ENCODE measurements at regions of chr11 and their contacts with region 1.

Region 1: DNA sequence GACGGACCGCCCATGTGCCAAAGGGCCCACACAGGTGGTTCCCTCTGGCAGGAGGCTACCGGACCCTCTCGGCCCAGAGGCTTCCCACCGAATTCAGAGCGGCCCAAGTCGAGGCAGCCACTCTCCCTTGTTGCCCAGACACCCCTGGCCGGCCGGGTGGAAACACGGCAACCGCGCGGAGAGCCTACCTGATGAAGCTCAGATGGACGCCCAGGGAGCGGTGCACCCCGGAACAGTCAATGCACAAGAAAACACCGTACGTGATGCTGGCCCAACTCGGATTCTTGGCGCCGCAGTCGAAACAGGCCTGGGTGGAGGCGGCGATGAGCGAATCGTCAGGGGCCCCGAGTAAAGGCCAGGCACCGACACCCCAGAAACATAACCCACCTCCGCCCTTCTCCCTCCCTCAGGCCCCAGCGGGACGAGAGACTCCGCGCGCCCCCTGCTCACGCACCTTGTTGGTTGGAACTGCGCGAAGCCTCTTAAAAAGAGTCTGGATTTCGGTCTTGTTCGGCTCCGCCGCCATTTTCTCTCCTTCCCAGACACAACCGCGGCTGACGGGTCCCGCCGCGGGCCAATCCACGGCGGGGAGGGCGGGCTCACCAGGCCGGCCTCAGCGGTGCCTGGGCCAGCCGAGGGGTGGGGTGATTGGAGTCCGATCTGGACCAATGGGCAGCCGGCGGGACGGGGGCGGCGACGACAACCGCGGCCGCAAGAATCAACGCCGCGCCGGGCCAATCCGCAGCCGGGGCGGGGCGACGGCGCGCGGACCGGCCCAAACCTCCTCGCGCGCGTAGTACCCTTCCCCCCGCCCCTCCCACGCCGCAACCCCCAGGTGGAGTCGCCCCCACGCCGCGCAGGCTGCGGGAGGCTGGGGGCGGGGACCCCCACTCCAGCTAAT is at the start of gene ARFGAP2:
- DNase-seq: peak; percentile 97 to 98 (median 98)
- H3K4me3 ChIP-seq: peak within 1 kb of the TSS; percentile 70 to 100 (median 96)
- H3K27ac ChIP-seq: peak within 1 kb of the TSS; percentile 98
- H3K4me1 ChIP-seq: peaks cover 2 to 31% (median 29%) of the 10 kb centered on the region in 4 experiments
- H3K27me3 ChIP-seq: no peaks in the 10 kb centered on the region

Region 2: GRCh38 chr11:47152953-47153950 is 23.3 kb before region 1 on chr11:
- CTCF ChIA-PET with region 1: interaction called, 15 read pairs
- POLR2A ChIA-PET with region 1: no interaction called
- DNase-seq: peak; percentile 64 to 76 (median 69)
- H3K4me3 ChIP-seq: no peak overlapping the region
- H3K27ac ChIP-seq: no peak overlapping the region
- H3K4me1 ChIP-seq: peaks cover 6 to 46% (median 34%) of the 10 kb centered on the region in 4 experiments
- H3K27me3 ChIP-seq: no peaks in the 10 kb centered on the region

Region 3: GRCh38 chr11:47161134-47161854 is 15.3 kb before region 1 on chr11:
- CTCF ChIA-PET with region 1: interaction called, 26 read pairs
- POLR2A ChIA-PET with region 1: no interaction called
- DNase-seq: peak; percentile 59 to 86 (median 81)
- H3K4me3 ChIP-seq: no peak overlapping the region
- H3K27ac ChIP-seq: no peak overlapping the region
- H3K4me1 ChIP-seq: peaks cover 0 to 20% (median 14%) of the 10 kb centered on the region in 4 experiments
- H3K27me3 ChIP-seq: no peaks in the 10 kb centered on the region

Region 4: GRCh38 chr11:47220401-47220824 is 43.8 kb after region 1 on chr11:
- CTCF ChIA-PET with region 1: interaction called, 14 read pairs
- POLR2A ChIA-PET with region 1: no interaction called
- DNase-seq: no peak
- H3K4me3 ChIP-seq: no peak overlapping the region
- H3K27ac ChIP-seq: no peak overlapping the region
- H3K4me1 ChIP-seq: peaks cover 8 to 22% (median 14%) of the 10 kb centered on the region in 4 experiments
- H3K27me3 ChIP-seq: no peaks in the 10 kb centered on the region

Region 5: DNA sequence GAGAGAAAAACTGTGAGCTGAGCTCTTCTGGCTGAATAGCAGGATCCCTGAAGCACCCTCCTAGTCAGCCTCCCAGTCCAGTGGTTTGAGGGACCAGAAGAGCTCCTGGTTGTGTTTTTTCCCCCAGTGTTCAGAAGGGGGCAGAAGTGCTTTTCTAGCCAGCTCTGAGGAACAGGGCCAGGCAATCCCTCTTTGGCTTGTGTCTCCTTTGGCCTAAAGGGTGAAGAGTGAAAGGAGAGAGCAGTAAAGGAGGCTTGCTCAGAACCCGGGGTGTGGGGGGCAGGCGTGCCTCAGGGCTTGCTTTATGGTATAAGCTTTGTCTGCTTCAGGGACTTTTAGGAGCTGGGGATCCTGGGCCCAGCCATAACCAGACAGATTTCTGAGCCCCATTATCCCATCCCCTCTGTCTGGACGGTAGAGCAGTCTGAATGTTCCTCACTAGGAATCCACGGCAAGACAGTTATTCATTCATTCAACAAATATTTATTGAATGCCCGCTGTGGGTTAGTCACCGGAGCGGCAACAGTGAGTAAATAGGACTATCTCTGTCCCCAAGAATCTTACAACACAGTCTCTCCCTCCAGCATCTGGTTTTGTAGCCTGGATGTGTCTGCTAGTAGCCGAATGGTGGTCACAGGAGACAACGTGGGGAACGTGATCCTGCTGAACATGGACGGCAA is 57.6 kb after region 1 on chr11:
- CTCF ChIA-PET with region 1: interaction called, 29 read pairs
- POLR2A ChIA-PET with region 1: no interaction called
- DNase-seq: peak; percentile 63 to 72 (median 70)
- H3K4me3 ChIP-seq: peak overlapping the region in 1 of 7 experiments; percentile 4
- H3K27ac ChIP-seq: no peak overlapping the region
- H3K4me1 ChIP-seq: peaks cover 0 to 15% (median 7%) of the 10 kb centered on the region in 4 experiments
- H3K27me3 ChIP-seq: no peaks in the 10 kb centered on the region

Region 6: GRCh38 chr11:47259178-47259977 is 82.8 kb after region 1 on chr11:
- CTCF ChIA-PET with region 1: interaction called, 65 read pairs
- POLR2A ChIA-PET with region 1: interaction called, 3 read pairs
- DNase-seq: peak; percentile 64 to 94 (median 91)
- H3K4me3 ChIP-seq: peak overlapping the region in 5 of 7 experiments; percentile 16 to 77 (median 56)
- H3K27ac ChIP-seq: peak overlapping the region in 1 of 2 experiments; percentile 75
- H3K4me1 ChIP-seq: peaks cover 14 to 69% (median 57%) of the 10 kb centered on the region in 4 experiments
- H3K27me3 ChIP-seq: no peaks in the 10 kb centered on the region

Region 7: DNA sequence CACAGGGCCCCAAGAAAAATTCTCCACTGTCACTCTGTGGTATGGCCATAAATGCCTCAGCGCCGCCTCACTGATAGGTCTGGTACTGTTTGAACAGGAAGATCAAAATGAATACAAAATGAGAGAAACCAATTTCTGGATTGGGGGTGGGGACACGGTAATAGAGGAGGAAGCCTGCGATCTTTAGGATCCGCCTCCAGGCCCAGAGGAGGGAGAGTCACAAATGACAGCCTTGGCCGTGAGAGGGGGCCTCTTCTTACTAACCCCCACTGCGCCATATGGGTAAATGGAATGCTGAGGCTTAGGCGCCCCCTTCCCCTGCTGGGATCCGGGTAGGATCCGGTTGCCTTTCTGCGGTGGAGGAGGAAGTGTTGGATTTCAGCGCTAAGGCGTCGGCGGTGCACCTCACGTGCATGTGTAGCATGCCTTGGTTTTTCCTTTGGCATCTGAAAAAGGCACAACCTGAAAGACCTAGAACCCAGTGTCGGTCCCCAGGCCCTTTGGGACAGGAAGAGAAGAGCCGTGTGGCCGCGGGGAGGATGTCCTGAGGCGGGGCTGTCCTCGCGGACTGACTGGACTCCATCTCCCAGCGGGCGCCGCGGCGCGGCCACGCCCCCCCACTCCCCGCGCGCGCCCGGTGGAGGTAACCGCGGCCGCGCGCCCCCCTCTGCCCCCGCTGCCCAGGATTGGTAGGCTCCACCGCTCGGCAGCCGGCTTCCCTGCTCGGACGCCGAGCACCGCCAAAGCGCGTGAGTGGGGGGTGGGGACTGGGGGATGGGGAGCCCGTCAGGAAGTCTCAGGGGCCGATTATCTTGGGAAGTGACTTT is 92.6 kb after region 1 on chr11:
- CTCF ChIA-PET with region 1: interaction called, 10 read pairs
- POLR2A ChIA-PET with region 1: no interaction called
- DNase-seq: peak; percentile 90 to 96 (median 95)
- H3K4me3 ChIP-seq: peak overlapping the region; percentile 65 to 88 (median 79)
- H3K27ac ChIP-seq: peak overlapping the region; percentile 93 to 95
- H3K4me1 ChIP-seq: peaks cover 32 to 73% (median 71%) of the 10 kb centered on the region in 4 experiments
- H3K27me3 ChIP-seq: no peaks in the 10 kb centered on the region

Region 8: DNA sequence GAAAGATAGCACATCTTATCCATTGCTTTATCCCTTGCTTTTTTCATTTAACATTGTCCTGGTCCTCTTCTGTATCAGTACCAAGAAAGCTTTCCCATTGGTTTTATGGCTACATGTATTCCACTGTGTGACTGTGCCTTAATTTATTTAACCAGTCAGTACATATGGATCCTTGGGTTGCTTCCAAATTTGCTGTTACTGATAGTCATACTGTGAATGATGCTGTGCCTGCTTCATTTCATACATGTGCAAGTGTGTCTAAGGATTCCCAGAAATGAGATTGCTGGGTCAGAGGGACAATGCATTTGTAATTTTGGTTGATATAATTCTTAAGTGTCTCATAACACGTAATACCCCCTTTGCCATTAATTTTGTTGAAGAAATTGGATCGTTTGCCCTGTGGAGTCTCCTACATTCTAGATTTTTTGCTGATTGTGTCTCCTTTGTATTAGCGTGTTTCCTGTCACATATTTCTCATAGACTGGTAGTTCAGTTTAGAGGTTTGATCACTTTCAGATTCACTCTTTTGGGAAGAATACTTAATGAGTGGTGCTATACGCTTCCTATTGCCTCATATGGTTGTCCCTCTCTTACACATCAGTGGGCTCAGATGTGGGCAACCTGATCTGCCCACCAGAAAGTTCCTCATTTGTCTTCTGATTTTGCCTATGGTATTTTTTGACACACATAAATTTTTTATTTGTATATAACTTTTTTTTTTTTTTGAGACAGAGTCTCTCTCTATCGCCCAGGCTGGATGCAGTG is 140.7 kb after region 1 on chr11:
- CTCF ChIA-PET with region 1: no interaction called
- POLR2A ChIA-PET with region 1: no interaction called
- DNase-seq: no peak
- H3K4me3 ChIP-seq: no peak overlapping the region
- H3K27ac ChIP-seq: no peak overlapping the region
- H3K4me1 ChIP-seq: peaks cover 0 to 3% (median 0%) of the 10 kb centered on the region in 4 experiments
- H3K27me3 ChIP-seq: no peaks in the 10 kb centered on the region